CD4-positive, alpha-beta memory T cell (primary cell): ENCODE measurements at regions of chr16 and their contacts with region 1.

Region 1: GRCh38 chr16:28974437-28975157 is at the start of gene SPNS1:
- DNase-seq: peak; percentile 84 to 90 (median 86)
- H3K4me3 ChIP-seq: peak within 1 kb of the TSS; percentile 65 to 91
- H3K4me3 Mint-ChIP-seq: peak within 1 kb of the TSS; percentile 97 to 99 (median 98)
- H3K27ac ChIP-seq: peak within 1 kb of the TSS; percentile 71
- H3K27ac Mint-ChIP-seq: peak within 1 kb of the TSS; percentile 93 to 99 (median 97)
- H3K4me1 ChIP-seq: peaks cover 32% of the 10 kb centered on the region
- H3K4me1 Mint-ChIP-seq: peaks cover 29 to 45% (median 36%) of the 10 kb centered on the region in 4 donors
- H3K27me3 ChIP-seq: no peaks in the 10 kb centered on the region
- H3K27me3 Mint-ChIP-seq: no peaks in the 10 kb centered on the region
- total RNA-seq, gene SPNS1: 31.0 to 34.4 TPM

Region 2: DNA sequence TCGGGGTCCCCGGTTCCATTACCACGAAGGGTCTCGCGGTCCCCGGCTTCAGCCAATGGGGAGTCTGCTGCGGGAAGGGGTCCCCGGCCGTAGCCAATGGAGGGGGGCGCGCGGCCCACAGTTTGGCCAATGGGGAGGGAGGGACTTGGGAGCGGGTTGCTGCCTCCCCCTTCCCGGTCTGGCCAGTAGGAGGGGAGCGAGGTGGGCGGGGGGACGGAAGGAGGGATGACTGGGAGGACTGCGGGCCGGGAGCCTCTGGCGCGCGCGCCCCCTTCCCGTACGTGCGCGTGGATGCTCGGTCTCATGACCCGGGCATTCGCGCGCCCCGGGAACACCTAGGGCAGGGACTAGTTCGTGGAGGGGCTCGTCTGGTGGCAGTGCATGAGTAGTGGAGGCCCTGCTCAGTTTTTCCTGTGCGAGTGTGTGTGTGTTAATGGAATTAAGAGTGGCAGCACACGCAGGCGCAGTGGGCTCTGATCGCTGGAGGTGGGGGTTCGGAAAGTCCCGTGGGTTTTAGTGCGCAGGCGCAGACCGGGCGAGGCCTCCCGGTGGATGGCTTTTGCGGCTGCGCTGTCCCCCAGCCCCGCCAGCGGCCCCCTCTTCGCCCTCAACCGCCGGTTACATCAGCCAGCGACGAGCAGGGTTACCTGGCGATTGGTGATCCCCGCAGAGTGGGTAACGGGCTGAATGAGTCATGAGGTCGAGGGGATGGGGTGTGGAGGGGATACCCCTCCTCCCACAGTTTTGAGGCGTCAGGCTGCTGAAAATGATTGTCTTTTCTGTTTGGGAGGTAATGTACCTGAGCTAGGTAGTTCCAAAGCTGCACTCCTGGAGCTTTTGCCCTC is 150.5 kb before region 1 on chr16:
- CTCF ChIA-PET with region 1: no interaction called
- POLR2A ChIA-PET with region 1: interaction called, 14 read pairs
- intact Hi-C with region 1: loop called (anchors 1 kb)
- DNase-seq: peak; percentile 94 to 99 (median 95)
- H3K4me3 ChIP-seq: peak overlapping the region; percentile 85 to 97
- H3K4me3 Mint-ChIP-seq: peak overlapping the region; percentile 93 to 99 (median 96)
- H3K27ac ChIP-seq: peak overlapping the region; percentile 98
- H3K27ac Mint-ChIP-seq: peak overlapping the region; percentile 96 to 100 (median 98)
- H3K4me1 ChIP-seq: peaks cover 32% of the 10 kb centered on the region
- H3K4me1 Mint-ChIP-seq: peaks cover 27 to 58% (median 40%) of the 10 kb centered on the region in 4 donors
- H3K27me3 ChIP-seq: no peaks in the 10 kb centered on the region
- H3K27me3 Mint-ChIP-seq: peaks cover 0 to 5% of the 10 kb centered on the region in 2 donors

Region 3: GRCh38 chr16:28950648-28951409 is 23.8 kb before region 1 on chr16 and contains the start of gene NFATC2IP:
- CTCF ChIA-PET with region 1: interaction called, 8 read pairs
- POLR2A ChIA-PET with region 1: interaction called, 16 read pairs
- intact Hi-C with region 1: loop called (anchors 1 kb)
- DNase-seq: peak; percentile 99 to 100 (median 100)
- H3K4me3 ChIP-seq: peak within 1 kb of the TSS; percentile 12 to 66
- H3K4me3 Mint-ChIP-seq: peak within 1 kb of the TSS; percentile 93 to 99 (median 96)
- H3K27ac ChIP-seq: peak within 1 kb of the TSS; percentile 70
- H3K27ac Mint-ChIP-seq: peak within 1 kb of the TSS; percentile 68 to 96 (median 93)
- H3K4me1 ChIP-seq: peaks cover 28% of the 10 kb centered on the region
- H3K4me1 Mint-ChIP-seq: peaks cover 14 to 40% (median 29%) of the 10 kb centered on the region in 4 donors
- H3K27me3 ChIP-seq: no peaks in the 10 kb centered on the region
- H3K27me3 Mint-ChIP-seq: no peaks in the 10 kb centered on the region
- total RNA-seq, gene NFATC2IP: 105 to 115 TPM

Region 4: GRCh38 chr16:28990375-28991040 is 15.9 kb after region 1 on chr16:
- CTCF ChIA-PET with region 1: interaction called, 41 read pairs
- POLR2A ChIA-PET with region 1: interaction called, 155 read pairs
- intact Hi-C with region 1: loop called (anchors 1 kb)
- DNase-seq: peak in 1 of 5 donors; percentile 73
- H3K4me3 ChIP-seq: no peak overlapping the region
- H3K4me3 Mint-ChIP-seq: peak overlapping the region; percentile 62 to 99 (median 80)
- H3K27ac ChIP-seq: peak overlapping the region; percentile 33
- H3K27ac Mint-ChIP-seq: peak overlapping the region; percentile 80 to 98 (median 93)
- H3K4me1 ChIP-seq: peaks cover 47% of the 10 kb centered on the region
- H3K4me1 Mint-ChIP-seq: peaks cover 33 to 58% (median 45%) of the 10 kb centered on the region in 4 donors
- H3K27me3 ChIP-seq: no peaks in the 10 kb centered on the region
- H3K27me3 Mint-ChIP-seq: no peaks in the 10 kb centered on the region

Region 5: GRCh38 chr16:29007730-29008593 is 33.4 kb after region 1 on chr16:
- CTCF ChIA-PET with region 1: interaction called, 14 read pairs
- POLR2A ChIA-PET with region 1: interaction called, 11 read pairs
- intact Hi-C with region 1: loop called (anchors 1 kb)
- DNase-seq: peak; percentile 64 to 84 (median 70)
- H3K4me3 ChIP-seq: peak overlapping the region in 1 of 2 donors; percentile 29
- H3K4me3 Mint-ChIP-seq: peak overlapping the region; percentile 10 to 89 (median 77)
- H3K27ac ChIP-seq: peak overlapping the region; percentile 12
- H3K27ac Mint-ChIP-seq: peak overlapping the region; percentile 83 to 99 (median 96)
- H3K4me1 ChIP-seq: peaks cover 58% of the 10 kb centered on the region
- H3K4me1 Mint-ChIP-seq: peaks cover 30 to 63% (median 46%) of the 10 kb centered on the region in 4 donors
- H3K27me3 ChIP-seq: no peaks in the 10 kb centered on the region
- H3K27me3 Mint-ChIP-seq: no peaks in the 10 kb centered on the region

Region 6: GRCh38 chr16:29012913-29013553 is 38.4 kb after region 1 on chr16:
- CTCF ChIA-PET with region 1: interaction called, 13 read pairs
- POLR2A ChIA-PET with region 1: interaction called, 11 read pairs
- intact Hi-C with region 1: loop called (anchors 1 kb)
- DNase-seq: peak; percentile 53 to 69 (median 62)
- H3K4me3 ChIP-seq: no peak overlapping the region
- H3K4me3 Mint-ChIP-seq: peak overlapping the region; percentile 13 to 77 (median 52)
- H3K27ac ChIP-seq: no peak overlapping the region
- H3K27ac Mint-ChIP-seq: peak overlapping the region; percentile 85 to 98 (median 95)
- H3K4me1 ChIP-seq: peaks cover 62% of the 10 kb centered on the region
- H3K4me1 Mint-ChIP-seq: peaks cover 31 to 59% (median 45%) of the 10 kb centered on the region in 4 donors
- H3K27me3 ChIP-seq: no peaks in the 10 kb centered on the region
- H3K27me3 Mint-ChIP-seq: no peaks in the 10 kb centered on the region

Region 7: DNA sequence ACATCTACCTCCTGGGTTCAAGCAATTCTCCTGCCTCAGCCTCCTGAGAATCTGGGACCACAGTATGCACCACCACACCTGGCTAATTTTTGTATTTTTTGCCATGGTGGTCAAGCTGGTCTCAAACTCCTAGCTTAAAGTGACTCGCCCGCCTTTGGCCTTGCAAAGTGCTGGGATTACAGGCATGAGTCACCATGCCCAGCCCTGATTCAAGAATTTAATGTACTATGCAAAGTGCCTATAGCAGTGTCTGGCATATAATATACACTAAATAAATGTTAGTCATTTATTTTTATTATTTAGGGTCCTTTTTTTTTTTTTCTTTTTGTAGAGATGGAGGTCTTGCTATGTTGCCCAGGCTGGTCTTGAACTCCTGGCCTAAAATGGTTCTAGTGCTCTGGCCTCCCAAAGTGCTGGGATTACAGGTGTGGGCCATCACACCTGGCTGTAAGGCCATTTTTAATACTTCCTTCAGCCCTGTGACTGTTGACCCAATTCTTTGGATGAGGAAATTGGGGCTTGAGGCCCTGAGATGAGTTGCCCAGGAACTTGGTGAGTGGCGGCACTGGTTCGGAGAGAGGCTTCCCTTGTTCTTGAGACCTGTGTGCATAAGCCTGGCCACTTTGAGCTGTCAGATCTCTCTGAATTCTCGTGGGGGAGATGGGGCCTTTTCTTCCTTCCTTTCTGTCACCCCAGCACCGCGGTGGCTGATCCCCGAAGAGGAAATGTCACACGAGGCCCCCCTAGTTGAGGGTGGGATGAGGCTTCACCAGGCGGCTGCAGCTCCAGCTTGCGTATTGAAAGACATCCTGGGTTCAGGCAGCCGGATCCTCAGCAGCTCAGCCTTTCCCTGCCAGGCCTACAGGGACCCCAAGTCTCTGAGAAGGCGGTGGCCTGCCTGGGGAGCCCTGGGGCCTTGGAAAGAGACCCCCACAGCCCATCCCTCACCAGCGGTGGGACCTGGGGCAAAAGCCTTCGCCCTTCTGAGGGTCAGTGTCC is 49.0 kb after region 1 on chr16:
- CTCF ChIA-PET with region 1: interaction called, 11 read pairs
- POLR2A ChIA-PET with region 1: interaction called, 5 read pairs
- intact Hi-C with region 1: no loop called
- DNase-seq: no peak
- H3K4me3 ChIP-seq: peak overlapping the region in 1 of 2 donors; percentile 17
- H3K4me3 Mint-ChIP-seq: peak overlapping the region in 4 of 8 donors; percentile 15 to 57 (median 48)
- H3K27ac ChIP-seq: no peak overlapping the region
- H3K27ac Mint-ChIP-seq: peak overlapping the region; percentile 30 to 88 (median 55)
- H3K4me1 ChIP-seq: peaks cover 47% of the 10 kb centered on the region
- H3K4me1 Mint-ChIP-seq: peaks cover 21 to 50% (median 36%) of the 10 kb centered on the region in 4 donors
- H3K27me3 ChIP-seq: no peaks in the 10 kb centered on the region
- H3K27me3 Mint-ChIP-seq: no peaks in the 10 kb centered on the region

Region 8: GRCh38 chr16:29148867-29149272 is 174.3 kb after region 1 on chr16:
- CTCF ChIA-PET with region 1: no interaction called
- POLR2A ChIA-PET with region 1: no interaction called
- intact Hi-C with region 1: no loop called
- DNase-seq: peak; percentile 84 to 90 (median 88)
- H3K4me3 ChIP-seq: no peak overlapping the region
- H3K4me3 Mint-ChIP-seq: peak overlapping the region; percentile 45 to 92 (median 66)
- H3K27ac ChIP-seq: peak overlapping the region; percentile 55
- H3K27ac Mint-ChIP-seq: peak overlapping the region; percentile 85 to 99 (median 97)
- H3K4me1 ChIP-seq: peaks cover 27% of the 10 kb centered on the region
- H3K4me1 Mint-ChIP-seq: peaks cover 15 to 47% (median 35%) of the 10 kb centered on the region in 4 donors
- H3K27me3 ChIP-seq: no peaks in the 10 kb centered on the region
- H3K27me3 Mint-ChIP-seq: no peaks in the 10 kb centered on the region